ENCODE measurements at regions of chr4 and their contacts with region 1.

Region 1: GRCh38 chr4:69800599-69800998 is 40.2 kb upstream of the SULT1B1 start:
- DNase-seq: no peak
- H3K4me3 Mint-ChIP-seq: no peak overlapping the region
- H3K27ac Mint-ChIP-seq: no peak overlapping the region
- H3K4me1 Mint-ChIP-seq: no peaks in the 10 kb centered on the region
- H3K27me3 Mint-ChIP-seq: peaks cover 2% of the 10 kb centered on the region

Region 2: GRCh38 chr4:69773484-69773883 is 27.1 kb before region 1 on chr4:
- CTCF ChIA-PET with region 1: no interaction called
- POLR2A ChIA-PET with region 1: no interaction called
- intact Hi-C with region 1: loop called (anchors 1 kb)
- DNase-seq: no peak
- H3K4me3 Mint-ChIP-seq: no peak overlapping the region
- H3K27ac Mint-ChIP-seq: no peak overlapping the region
- H3K4me1 Mint-ChIP-seq: no peaks in the 10 kb centered on the region
- H3K27me3 Mint-ChIP-seq: no peaks in the 10 kb centered on the region

Region 3: GRCh38 chr4:70133491-70133890 is 332.9 kb after region 1 on chr4:
- CTCF ChIA-PET with region 1: no interaction called
- POLR2A ChIA-PET with region 1: no interaction called
- intact Hi-C with region 1: loop called (anchors 5 kb)
- DNase-seq: no peak
- H3K4me3 Mint-ChIP-seq: no peak overlapping the region
- H3K27ac Mint-ChIP-seq: no peak overlapping the region
- H3K4me1 Mint-ChIP-seq: no peaks in the 10 kb centered on the region
- H3K27me3 Mint-ChIP-seq: no peaks in the 10 kb centered on the region